ENCODE measurements at regions of chr6 and their contacts with region 1.

Region 1: DNA sequence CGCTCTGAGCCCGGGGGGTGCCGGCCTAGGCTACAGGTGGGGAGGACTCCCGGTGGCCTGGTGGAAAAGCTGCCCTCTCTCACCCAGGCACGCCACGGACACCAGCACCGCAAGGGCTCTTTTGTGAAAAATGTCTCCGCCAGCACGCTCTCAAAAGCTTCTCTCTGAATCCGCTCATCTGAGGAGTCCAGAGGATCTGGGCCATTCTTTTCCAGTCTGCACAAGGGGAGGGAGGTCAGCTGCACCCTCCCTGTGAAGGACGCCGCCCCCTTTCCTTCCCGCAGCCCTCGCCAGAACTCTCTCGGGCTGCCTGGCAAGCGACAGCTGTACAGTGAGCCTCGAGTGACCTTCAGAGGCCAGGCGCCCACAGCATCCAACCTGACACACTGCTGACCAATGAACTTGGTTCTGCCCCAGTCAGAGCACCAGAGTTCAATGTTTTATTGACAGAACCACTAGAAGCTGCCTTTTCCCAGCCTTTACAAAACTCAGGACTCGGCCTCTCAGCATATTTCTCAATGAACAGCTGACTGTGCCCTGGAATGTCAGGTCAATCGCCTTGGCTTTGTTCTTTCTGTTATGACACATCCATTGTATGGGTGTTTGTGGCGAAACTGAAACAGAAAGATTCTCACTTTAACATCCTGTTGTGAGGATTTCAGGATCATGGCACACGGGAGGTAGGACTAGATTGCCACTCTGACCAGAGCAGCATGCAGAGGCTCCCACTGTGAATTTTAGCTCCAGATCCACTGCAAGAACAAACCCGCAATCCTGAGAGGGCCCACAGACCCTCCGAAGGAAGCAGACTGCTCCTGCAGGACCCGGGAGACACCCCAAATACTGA is 26.7 kb downstream of the SERPINB9 start:
- DNase-seq: no peak
- H3K4me3 Mint-ChIP-seq: peak overlapping the region; percentile 86
- H3K27ac Mint-ChIP-seq: peak overlapping the region; percentile 99
- H3K4me1 Mint-ChIP-seq: peaks cover 65% of the 10 kb centered on the region
- H3K27me3 Mint-ChIP-seq: no peaks in the 10 kb centered on the region

Region 2: DNA sequence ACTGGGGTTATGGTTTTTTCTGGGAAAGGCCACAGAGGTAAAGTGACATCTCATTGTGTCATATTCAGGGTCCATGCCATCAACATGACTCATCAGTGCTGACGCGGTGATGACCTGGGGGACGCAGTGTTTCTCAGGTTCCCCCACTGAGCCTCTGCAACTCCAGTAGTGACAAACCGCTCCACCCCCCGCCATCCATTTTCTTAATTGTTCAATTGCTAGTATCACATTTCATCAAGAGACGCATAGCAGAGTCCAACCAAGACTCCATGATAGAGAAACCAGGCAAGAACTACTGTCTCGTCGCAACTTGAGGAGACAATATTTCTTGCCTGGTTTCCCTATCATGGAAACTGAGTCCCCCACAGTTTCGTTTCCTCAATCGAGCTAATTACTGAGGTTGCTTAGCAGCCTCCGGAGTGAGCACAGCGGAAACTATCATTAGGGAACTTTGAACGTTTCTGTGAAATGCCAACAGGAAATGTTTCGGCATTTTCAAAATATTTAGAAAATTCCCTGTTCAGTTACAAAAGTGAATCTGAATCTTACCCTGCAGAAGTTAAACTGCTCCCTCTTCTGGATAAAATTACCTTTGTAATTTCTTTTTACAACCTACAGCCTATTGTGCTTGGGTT is 22.6 kb before region 1 on chr6:
- intact Hi-C with region 1: loop called (anchors 1 kb)
- DNase-seq: no peak
- H3K4me3 Mint-ChIP-seq: peak overlapping the region; percentile 43
- H3K27ac Mint-ChIP-seq: peak overlapping the region; percentile 99
- H3K4me1 Mint-ChIP-seq: peaks cover 68% of the 10 kb centered on the region
- H3K27me3 Mint-ChIP-seq: no peaks in the 10 kb centered on the region

Region 3: GRCh38 chr6:2931970-2932748 is 55.7 kb after region 1 on chr6:
- intact Hi-C with region 1: no loop called
- DNase-seq: peak; percentile 78
- H3K4me3 Mint-ChIP-seq: no peak overlapping the region
- H3K27ac Mint-ChIP-seq: peak overlapping the region; percentile 54
- H3K4me1 Mint-ChIP-seq: peaks cover 23% of the 10 kb centered on the region
- H3K27me3 Mint-ChIP-seq: no peaks in the 10 kb centered on the region